CD8-positive, alpha-beta T cell (primary cell): ENCODE measurements at regions of chr20 and their contacts with region 1.

Region 1: DNA sequence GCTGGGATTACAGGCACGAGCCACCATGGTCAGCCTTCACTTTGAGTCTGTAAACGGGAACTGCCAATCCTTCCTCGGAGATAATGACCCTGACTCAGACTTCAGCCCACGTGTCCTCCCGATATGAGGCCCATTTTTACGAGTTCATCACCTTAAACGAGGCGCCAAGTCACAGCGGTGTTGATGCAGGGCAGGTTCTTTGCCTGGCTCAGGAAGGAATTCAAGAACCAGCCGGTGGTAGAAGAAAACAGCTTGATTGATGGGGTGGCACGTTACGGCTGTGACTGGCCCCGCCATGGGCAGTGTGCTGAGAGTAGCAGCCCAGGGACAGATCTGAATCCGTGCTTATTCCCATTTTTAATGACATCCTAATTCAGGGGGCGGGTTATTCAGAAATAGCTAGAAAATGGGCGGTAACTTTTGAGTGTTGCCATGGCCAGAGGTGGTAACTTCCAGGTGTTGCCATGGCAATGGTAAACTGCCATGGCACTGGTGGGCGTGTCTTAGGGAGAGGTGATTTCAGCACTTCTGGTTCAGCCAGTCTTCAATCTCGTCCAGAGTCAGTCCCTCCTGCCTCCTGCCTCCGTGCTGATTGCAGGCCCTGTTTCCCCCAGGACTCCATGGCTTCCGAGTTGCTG is 9.1 kb upstream of the MAP1LC3A start:
- DNase-seq: peak in 1 of 9 experiments; percentile 37
- ATAC-seq: no peak
- H3K4me3 ChIP-seq: no peak overlapping the region
- H3K4me3 Mint-ChIP-seq: no peak overlapping the region
- H3K27ac ChIP-seq: no peak overlapping the region
- H3K27ac Mint-ChIP-seq: no peak overlapping the region
- H3K4me1 ChIP-seq: no peaks in the 10 kb centered on the region
- H3K4me1 Mint-ChIP-seq: peaks cover 4% of the 10 kb centered on the region
- H3K27me3 ChIP-seq: no peaks in the 10 kb centered on the region
- H3K27me3 Mint-ChIP-seq: no peaks in the 10 kb centered on the region
- CTCF ChIP-seq: no peak

Region 2: GRCh38 chr20:34493646-34494045 is 55.8 kb before region 1 on chr20:
- CTCF ChIA-PET with region 1: no interaction called
- POLR2A ChIA-PET with region 1: no interaction called
- intact Hi-C with region 1: no loop called
- DNase-seq: no peak
- ATAC-seq: no peak
- H3K4me3 ChIP-seq: no peak overlapping the region
- H3K4me3 Mint-ChIP-seq: no peak overlapping the region
- H3K27ac ChIP-seq: no peak overlapping the region
- H3K27ac Mint-ChIP-seq: no peak overlapping the region
- H3K4me1 ChIP-seq: no peaks in the 10 kb centered on the region
- H3K4me1 Mint-ChIP-seq: no peaks in the 10 kb centered on the region
- H3K27me3 ChIP-seq: no peaks in the 10 kb centered on the region
- H3K27me3 Mint-ChIP-seq: no peaks in the 10 kb centered on the region
- CTCF ChIP-seq: no peak

Region 3: DNA sequence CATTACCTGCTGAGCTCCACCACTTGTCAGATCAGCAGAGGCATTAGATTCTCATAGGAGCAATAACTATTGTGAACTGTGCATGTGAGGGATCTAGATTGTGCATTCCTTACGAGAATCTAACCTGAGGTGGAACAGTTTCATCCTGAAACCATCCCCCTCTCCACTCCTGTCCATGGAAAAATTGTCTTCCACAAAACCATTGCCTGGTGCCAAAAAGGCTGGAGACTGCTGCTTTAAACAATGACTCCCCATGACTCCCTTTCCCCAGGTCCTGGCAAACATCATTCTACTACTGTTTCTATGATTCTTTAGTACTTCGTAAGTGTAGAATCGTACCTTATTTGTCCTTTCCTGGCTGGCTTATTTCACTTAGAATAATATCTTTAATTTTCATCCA is 42.9 kb before region 1 on chr20:
- CTCF ChIA-PET with region 1: no interaction called
- POLR2A ChIA-PET with region 1: no interaction called
- intact Hi-C with region 1: no loop called
- DNase-seq: no peak
- ATAC-seq: no peak
- H3K4me3 ChIP-seq: no peak overlapping the region
- H3K4me3 Mint-ChIP-seq: no peak overlapping the region
- H3K27ac ChIP-seq: no peak overlapping the region
- H3K27ac Mint-ChIP-seq: peak overlapping the region; percentile 49
- H3K4me1 ChIP-seq: no peaks in the 10 kb centered on the region
- H3K4me1 Mint-ChIP-seq: peaks cover 2% of the 10 kb centered on the region
- H3K27me3 ChIP-seq: no peaks in the 10 kb centered on the region
- H3K27me3 Mint-ChIP-seq: no peaks in the 10 kb centered on the region
- CTCF ChIP-seq: no peak

Region 4: GRCh38 chr20:34522969-34523871 is 26.2 kb before region 1 on chr20:
- CTCF ChIA-PET with region 1: no interaction called
- POLR2A ChIA-PET with region 1: no interaction called
- intact Hi-C with region 1: no loop called
- DNase-seq: peak in 8 of 9 experiments; percentile 30 to 69 (median 58)
- ATAC-seq: peak; percentile 83
- H3K4me3 ChIP-seq: no peak overlapping the region
- H3K4me3 Mint-ChIP-seq: no peak overlapping the region
- H3K27ac ChIP-seq: no peak overlapping the region
- H3K27ac Mint-ChIP-seq: no peak overlapping the region
- H3K4me1 ChIP-seq: peaks cover 13% of the 10 kb centered on the region
- H3K4me1 Mint-ChIP-seq: peaks cover 55% of the 10 kb centered on the region
- H3K27me3 ChIP-seq: no peaks in the 10 kb centered on the region
- H3K27me3 Mint-ChIP-seq: no peaks in the 10 kb centered on the region
- CTCF ChIP-seq: peak; percentile 45

Region 5: DNA sequence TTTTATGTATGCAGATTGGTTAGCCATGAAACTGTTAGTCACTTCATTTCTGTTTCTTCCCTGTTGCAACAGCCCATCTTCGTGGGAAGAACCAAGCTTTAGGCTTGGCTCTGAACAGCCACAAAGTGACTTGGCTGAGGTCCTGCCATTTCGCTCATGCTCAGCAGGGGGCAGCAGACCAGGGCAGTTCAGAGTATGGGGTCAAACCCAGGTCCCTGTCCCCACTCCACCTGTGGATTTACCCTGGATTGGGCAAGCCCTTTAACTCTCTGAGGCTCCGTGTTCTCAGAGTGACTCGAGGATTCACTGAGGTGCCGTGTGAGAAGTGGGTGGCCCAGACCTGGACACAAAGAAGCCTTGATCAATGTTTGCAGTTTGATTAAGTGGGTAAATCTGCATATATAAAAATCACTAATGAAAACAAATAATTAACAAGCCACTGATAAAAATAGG is 10.7 kb before region 1 on chr20:
- CTCF ChIA-PET with region 1: interaction called, 17 read pairs
- POLR2A ChIA-PET with region 1: no interaction called
- intact Hi-C with region 1: no loop called
- DNase-seq: peak in 8 of 9 experiments; percentile 15 to 65 (median 56)
- ATAC-seq: peak; percentile 67
- H3K4me3 ChIP-seq: no peak overlapping the region
- H3K4me3 Mint-ChIP-seq: no peak overlapping the region
- H3K27ac ChIP-seq: no peak overlapping the region
- H3K27ac Mint-ChIP-seq: no peak overlapping the region
- H3K4me1 ChIP-seq: no peaks in the 10 kb centered on the region
- H3K4me1 Mint-ChIP-seq: peaks cover 12% of the 10 kb centered on the region
- H3K27me3 ChIP-seq: no peaks in the 10 kb centered on the region
- H3K27me3 Mint-ChIP-seq: no peaks in the 10 kb centered on the region
- CTCF ChIP-seq: peak; percentile 83